ENCODE measurements at regions of chr4 and their contacts with region 1.

Region 1: DNA sequence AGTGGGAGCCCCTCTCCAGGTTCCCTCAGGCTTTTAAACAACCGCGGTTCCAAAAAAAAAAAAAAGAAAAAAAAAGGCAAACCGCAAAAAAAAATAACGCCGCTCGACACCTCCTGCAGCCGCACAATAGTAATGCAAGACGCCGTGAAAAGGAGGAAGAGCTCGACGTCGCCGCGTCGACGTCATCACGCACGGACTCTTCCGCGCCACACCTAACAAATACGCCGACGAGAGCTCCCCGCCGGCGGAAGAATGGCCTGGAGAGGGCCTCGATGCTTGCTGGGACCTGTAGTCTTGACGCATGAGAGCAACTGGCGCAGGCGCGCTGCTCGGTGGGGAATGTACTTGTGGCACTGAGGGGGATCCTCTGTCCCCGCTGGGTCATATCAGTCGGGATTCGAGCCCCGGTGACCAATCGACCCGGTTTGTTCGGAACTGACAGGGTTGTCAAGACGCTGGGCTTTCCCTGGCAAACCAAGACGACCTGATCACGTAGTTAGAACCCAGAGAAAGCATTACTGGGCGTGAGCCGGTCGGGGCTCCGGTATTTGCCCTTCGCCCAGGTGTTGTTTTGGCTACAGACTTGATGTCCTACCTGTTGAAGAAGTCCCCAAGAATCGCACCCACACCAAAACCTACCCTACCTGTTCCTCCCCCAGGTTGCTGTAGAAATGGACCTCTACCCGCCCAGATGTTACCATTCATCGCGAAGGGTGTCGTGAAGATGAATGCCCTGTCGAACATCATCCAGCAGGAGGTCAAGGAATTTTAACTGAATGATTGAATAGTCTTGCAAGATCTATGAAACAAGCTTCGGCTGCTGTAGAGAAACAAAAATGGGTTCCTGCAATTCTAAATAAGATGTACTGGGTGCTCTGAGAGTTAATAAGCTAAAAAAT is at the start of gene CBR4:
- DNase-seq: peak; percentile 97
- ATAC-seq: peak; percentile 98
- H3K4me3 ChIP-seq: peak within 1 kb of the TSS; percentile 79 to 96 (median 82)
- H3K27ac ChIP-seq: peak within 1 kb of the TSS; percentile 90
- H3K4me1 ChIP-seq: peaks cover 75% of the 10 kb centered on the region
- H3K27me3 ChIP-seq: peaks cover 0 to 3% of the 10 kb centered on the region in 2 experiments; a peak in 1 of 5 replicates
- CTCF ChIP-seq: no peak; the same call in 1 of the 2 replicates
- EP300 ChIP-seq: no peak
- POLR2A ChIP-seq: peak; percentile 90 to 91
- RAD21 ChIP-seq: no peak
- total RNA-seq, gene CBR4: 20.7 and 21.9 TPM in 2 replicates

Region 2: DNA sequence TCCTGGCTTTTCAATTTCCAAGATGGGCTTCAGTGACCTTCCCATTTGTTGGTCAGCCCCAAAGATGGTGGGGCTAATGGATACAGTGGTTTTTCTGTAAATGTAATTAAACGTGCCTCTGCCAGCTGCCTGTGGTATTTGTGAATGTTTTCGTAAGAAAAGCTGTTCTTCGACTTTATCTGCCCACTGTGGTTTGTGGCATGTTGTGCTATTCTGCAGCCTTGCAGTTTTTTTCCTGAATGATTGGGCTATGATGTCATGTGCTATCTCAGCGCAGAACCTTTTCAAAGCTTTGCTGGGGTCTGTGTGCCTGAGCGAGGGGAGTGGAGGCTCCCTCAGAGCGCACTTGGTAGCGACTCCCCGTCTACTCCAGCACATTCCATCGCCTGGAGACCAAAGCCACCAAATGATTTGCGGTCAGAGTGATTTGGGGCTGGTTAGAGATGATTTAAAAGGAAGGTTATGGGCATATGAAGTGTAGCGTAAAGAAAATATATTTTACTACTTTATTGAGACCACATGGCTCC is 376.0 kb before region 1 on chr4:
- CTCF ChIA-PET with region 1: no interaction called
- POLR2A ChIA-PET with region 1: no interaction called
- in situ Hi-C with region 1: no loop called
- intact Hi-C with region 1: no loop called
- DNase-seq: no peak
- ATAC-seq: no peak
- H3K4me3 ChIP-seq: no peak overlapping the region
- H3K27ac ChIP-seq: no peak overlapping the region
- H3K4me1 ChIP-seq: 0 out of 2 replicates have a peak, but pooled peaks cover 10% of the 10 kb centered on the region
- H3K27me3 ChIP-seq: peaks cover 0 to 24% of the 10 kb centered on the region in 2 experiments; a peak in 3 of 5 replicates
- CTCF ChIP-seq: no peak
- EP300 ChIP-seq: no peak
- POLR2A ChIP-seq: no peak
- RAD21 ChIP-seq: no peak

Region 3: DNA sequence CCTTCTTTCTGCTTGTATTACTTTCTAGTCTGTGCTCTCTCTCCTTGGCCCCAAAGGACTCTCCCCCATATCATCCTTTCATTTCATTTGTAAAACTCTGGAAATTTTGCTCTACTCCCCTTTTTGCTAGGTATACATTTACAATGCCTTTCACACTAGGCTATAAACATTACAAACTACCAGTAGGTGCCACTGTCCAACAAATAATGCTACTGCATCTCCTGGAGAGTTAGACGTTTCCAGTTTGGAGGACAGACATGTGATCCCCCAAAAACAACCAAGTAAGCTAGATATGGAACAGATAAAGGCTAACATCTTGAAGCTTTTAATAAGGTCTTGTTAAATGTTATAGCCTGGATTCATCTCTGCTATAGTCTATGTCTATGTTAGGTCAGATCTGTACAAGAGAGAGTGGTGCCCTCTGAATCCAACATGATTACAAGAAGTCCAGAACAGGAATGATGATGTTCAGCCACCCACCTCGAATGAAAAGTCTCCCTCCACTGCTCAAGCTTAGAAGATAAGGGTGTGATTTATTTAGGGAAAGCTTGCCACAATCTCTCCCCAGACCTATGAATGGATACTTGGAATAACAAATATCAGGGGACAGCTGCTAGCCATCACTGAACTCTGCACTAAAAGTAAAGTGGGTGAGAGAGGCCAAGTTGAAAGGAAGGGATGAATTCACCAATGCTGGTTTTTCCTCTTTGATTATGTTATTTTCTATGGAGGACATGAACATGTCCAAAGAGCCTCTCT is 14.7 kb before region 1 on chr4:
- CTCF ChIA-PET with region 1: no interaction called
- POLR2A ChIA-PET with region 1: interaction called, 20 read pairs
- in situ Hi-C with region 1: no loop called
- intact Hi-C with region 1: no loop called
- DNase-seq: no peak
- ATAC-seq: peak; percentile 59; the same call in 2 of the 3 replicates
- H3K4me3 ChIP-seq: no peak overlapping the region
- H3K27ac ChIP-seq: no peak overlapping the region
- H3K4me1 ChIP-seq: peaks cover 11% of the 10 kb centered on the region; the same call in 1 of the 2 replicates
- H3K27me3 ChIP-seq: no peaks in the 10 kb centered on the region
- CTCF ChIP-seq: peak; percentile 30; the same call in 1 of the 2 replicates
- EP300 ChIP-seq: no peak
- POLR2A ChIP-seq: no peak
- RAD21 ChIP-seq: no peak

Region 4: DNA sequence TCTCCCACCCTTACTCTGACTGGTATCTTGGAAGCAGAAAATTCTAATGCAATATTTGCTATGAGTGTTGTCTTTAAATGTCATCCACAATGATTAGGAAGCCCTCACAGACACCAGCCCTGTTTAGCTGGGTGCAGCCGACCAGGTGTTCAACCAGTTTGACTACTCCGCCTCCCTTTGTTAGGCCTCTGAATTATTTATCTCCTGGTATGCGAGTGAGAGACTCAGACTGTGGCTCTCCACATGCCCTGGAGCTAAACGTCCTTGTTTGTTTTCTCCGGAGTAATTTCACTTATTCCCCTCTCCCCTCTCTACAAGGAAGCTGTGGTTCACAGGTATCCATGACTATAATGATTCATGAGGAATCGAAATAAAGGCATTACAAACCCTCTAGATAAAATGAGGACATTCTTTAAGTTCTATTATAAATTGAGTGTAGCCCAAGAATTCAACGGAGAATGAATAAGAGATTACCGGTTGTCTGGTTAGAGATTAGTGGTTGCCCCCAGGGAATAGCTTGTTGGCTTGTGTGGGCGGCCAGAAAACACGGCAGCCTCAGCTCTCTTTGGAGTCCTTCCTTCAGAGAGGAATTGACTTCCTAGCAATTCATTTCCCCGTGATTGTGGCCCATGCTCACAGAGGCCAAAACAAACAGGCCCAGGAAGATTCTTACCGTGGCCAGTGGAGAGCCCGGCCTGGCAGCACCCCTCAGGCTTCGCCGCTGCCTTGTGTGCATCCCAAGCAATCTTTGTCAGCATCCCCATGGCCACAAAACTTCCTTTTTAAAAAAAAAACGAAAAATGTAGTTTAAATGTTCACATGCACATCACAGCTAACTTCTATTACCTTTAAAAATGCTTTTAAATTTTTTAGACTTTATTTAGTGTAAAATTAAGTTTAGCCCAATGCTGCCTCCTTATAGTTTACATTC is 59.9 kb after region 1 on chr4:
- CTCF ChIA-PET with region 1: no interaction called
- POLR2A ChIA-PET with region 1: interaction called, 17 read pairs
- in situ Hi-C with region 1: no loop called
- intact Hi-C with region 1: no loop called
- DNase-seq: peak; percentile 35
- ATAC-seq: peak; percentile 57
- H3K4me3 ChIP-seq: peak overlapping the region; percentile 45 to 66 (median 51)
- H3K27ac ChIP-seq: peak overlapping the region; percentile 72
- H3K4me1 ChIP-seq: peaks cover 59% of the 10 kb centered on the region
- H3K27me3 ChIP-seq: no peaks in the 10 kb centered on the region
- CTCF ChIP-seq: no peak
- EP300 ChIP-seq: no peak
- POLR2A ChIP-seq: no peak
- RAD21 ChIP-seq: no peak

Region 5: GRCh38 chr4:169485791-169486742 is 475.7 kb after region 1 on chr4:
- CTCF ChIA-PET with region 1: no interaction called
- POLR2A ChIA-PET with region 1: no interaction called
- in situ Hi-C with region 1: loop called (anchors 10 kb)
- intact Hi-C with region 1: loop called (anchors 1 kb)
- DNase-seq: peak; percentile 36
- ATAC-seq: peak; percentile 67
- H3K4me3 ChIP-seq: 0 out of 6 replicates have a peak overlapping the region, but pooled peaks of 1 of the 3 experiments have one; percentile 3
- H3K27ac ChIP-seq: no peak overlapping the region
- H3K4me1 ChIP-seq: peaks cover 5% of the 10 kb centered on the region; the same call in 1 of the 2 replicates
- H3K27me3 ChIP-seq: no peaks in the 10 kb centered on the region
- CTCF ChIP-seq: peak; percentile 83
- EP300 ChIP-seq: no peak
- POLR2A ChIP-seq: no peak
- RAD21 ChIP-seq: peak; percentile 59

Measured in HepG2 (cell line).